Endothelial cell of umbilical vein (primary cell): ENCODE measurements at regions of chr3 and their contacts with region 1.

Region 1: GRCh38 chr3:45210308-45211041 is 15.6 kb downstream of the TMEM158 start:
- DNase-seq: peak; percentile 57
- H3K4me3 ChIP-seq: no peak overlapping the region
- H3K27ac ChIP-seq: no peak overlapping the region
- H3K4me1 ChIP-seq: no peaks in the 10 kb centered on the region
- H3K27me3 ChIP-seq: peaks cover 0 to 2% of the 10 kb centered on the region in 2 experiments
- CTCF ChIP-seq: peak; percentile 76 to 90
- POLR2A ChIP-seq: no peak

Region 2: GRCh38 chr3:45055411-45056143 is 154.9 kb before region 1 on chr3:
- CTCF ChIA-PET with region 1: interaction called, 19 read pairs
- POLR2A ChIA-PET with region 1: no interaction called
- dilution Hi-C with region 1: no loop called
- intact Hi-C with region 1: no loop called
- DNase-seq: no peak
- H3K4me3 ChIP-seq: no peak overlapping the region
- H3K27ac ChIP-seq: no peak overlapping the region
- H3K4me1 ChIP-seq: peaks cover 3% of the 10 kb centered on the region
- H3K27me3 ChIP-seq: no peaks in the 10 kb centered on the region
- CTCF ChIP-seq: no peak
- POLR2A ChIP-seq: no peak

Region 3: GRCh38 chr3:45123030-45123429 is 87.4 kb before region 1 on chr3:
- CTCF ChIA-PET with region 1: interaction called, 12 read pairs
- POLR2A ChIA-PET with region 1: no interaction called
- dilution Hi-C with region 1: no loop called
- intact Hi-C with region 1: no loop called
- DNase-seq: peak; percentile 12
- H3K4me3 ChIP-seq: no peak overlapping the region
- H3K27ac ChIP-seq: peak overlapping the region; percentile 26
- H3K4me1 ChIP-seq: peaks cover 14% of the 10 kb centered on the region
- H3K27me3 ChIP-seq: no peaks in the 10 kb centered on the region
- CTCF ChIP-seq: no peak
- POLR2A ChIP-seq: no peak

Region 4: GRCh38 chr3:45178183-45179023 is 32.1 kb before region 1 on chr3:
- CTCF ChIA-PET with region 1: interaction called, 10 read pairs
- POLR2A ChIA-PET with region 1: no interaction called
- dilution Hi-C with region 1: no loop called
- intact Hi-C with region 1: no loop called
- DNase-seq: no peak
- H3K4me3 ChIP-seq: no peak overlapping the region
- H3K27ac ChIP-seq: no peak overlapping the region
- H3K4me1 ChIP-seq: no peaks in the 10 kb centered on the region
- H3K27me3 ChIP-seq: peaks cover 0 to 2% of the 10 kb centered on the region in 2 experiments
- CTCF ChIP-seq: no peak
- POLR2A ChIP-seq: no peak

Region 5: GRCh38 chr3:45224824-45225464 is 14.5 kb after region 1 on chr3:
- CTCF ChIA-PET with region 1: interaction called, 29 read pairs
- POLR2A ChIA-PET with region 1: no interaction called
- dilution Hi-C with region 1: no loop called
- intact Hi-C with region 1: no loop called
- DNase-seq: peak; percentile 64
- H3K4me3 ChIP-seq: peak overlapping the region; percentile 12 to 76 (median 45)
- H3K27ac ChIP-seq: no peak overlapping the region
- H3K4me1 ChIP-seq: peaks cover 10% of the 10 kb centered on the region
- H3K27me3 ChIP-seq: peaks cover 20 to 42% of the 10 kb centered on the region in 2 experiments
- CTCF ChIP-seq: peak; percentile 52 to 72
- POLR2A ChIP-seq: no peak